ENCODE measurements at regions of chr5 and their contacts with region 1.

Region 1: GRCh38 chr5:141349917-141350619 is at the start of gene PCDHGB1:
- DNase-seq: peak in 1 of 2 donors; percentile 82
- H3K4me3 ChIP-seq: no peak within 1 kb of the TSS
- CTCF ChIP-seq: no peak
- POLR2A ChIP-seq: no peak
- total RNA-seq, gene PCDHGB1: 0.30 to 1.3 (median 1.1) TPM

Region 2: DNA sequence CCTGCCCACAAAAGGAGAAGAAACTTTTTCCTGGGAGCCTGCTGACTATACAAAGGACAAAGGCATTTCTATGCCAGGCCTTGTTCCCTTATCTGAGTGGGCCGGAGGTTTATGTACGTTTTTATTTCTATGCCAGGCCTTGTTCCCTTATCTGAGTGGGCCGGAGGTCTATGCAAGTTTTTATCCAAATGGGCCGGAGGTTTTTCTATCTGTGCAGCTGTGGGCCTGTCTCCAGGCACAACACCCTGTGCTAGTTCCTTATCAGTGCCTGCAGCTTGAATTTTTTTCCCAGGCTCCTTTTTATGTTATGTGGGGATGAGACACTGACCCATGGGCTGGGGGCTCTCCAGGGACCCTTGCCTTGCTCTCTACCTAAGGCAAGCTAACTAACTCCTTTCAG is 51.7 kb before region 1 on chr5:
- intact Hi-C with region 1: loop called (anchors 2 kb)
- DNase-seq: no peak
- H3K4me3 ChIP-seq: no peak overlapping the region
- CTCF ChIP-seq: no peak
- POLR2A ChIP-seq: no peak

Region 3: GRCh38 chr5:141330299-141331080 is 19.6 kb before region 1 on chr5 and contains the start of gene PCDHGA1:
- intact Hi-C with region 1: no loop called
- DNase-seq: no peak
- H3K4me3 ChIP-seq: no peak within 1 kb of the TSS
- CTCF ChIP-seq: no peak
- POLR2A ChIP-seq: no peak
- total RNA-seq, gene PCDHGA1: 0.52 to 0.54 (median 0.53) TPM in 3 of 4 donors, not detected in the other

Measured in lower leg skin (tissue), 4 donors.